Gastrocnemius medialis (tissue), 4 donors: ENCODE measurements at regions of chr17 and their contacts with region 1.

Region 1: DNA sequence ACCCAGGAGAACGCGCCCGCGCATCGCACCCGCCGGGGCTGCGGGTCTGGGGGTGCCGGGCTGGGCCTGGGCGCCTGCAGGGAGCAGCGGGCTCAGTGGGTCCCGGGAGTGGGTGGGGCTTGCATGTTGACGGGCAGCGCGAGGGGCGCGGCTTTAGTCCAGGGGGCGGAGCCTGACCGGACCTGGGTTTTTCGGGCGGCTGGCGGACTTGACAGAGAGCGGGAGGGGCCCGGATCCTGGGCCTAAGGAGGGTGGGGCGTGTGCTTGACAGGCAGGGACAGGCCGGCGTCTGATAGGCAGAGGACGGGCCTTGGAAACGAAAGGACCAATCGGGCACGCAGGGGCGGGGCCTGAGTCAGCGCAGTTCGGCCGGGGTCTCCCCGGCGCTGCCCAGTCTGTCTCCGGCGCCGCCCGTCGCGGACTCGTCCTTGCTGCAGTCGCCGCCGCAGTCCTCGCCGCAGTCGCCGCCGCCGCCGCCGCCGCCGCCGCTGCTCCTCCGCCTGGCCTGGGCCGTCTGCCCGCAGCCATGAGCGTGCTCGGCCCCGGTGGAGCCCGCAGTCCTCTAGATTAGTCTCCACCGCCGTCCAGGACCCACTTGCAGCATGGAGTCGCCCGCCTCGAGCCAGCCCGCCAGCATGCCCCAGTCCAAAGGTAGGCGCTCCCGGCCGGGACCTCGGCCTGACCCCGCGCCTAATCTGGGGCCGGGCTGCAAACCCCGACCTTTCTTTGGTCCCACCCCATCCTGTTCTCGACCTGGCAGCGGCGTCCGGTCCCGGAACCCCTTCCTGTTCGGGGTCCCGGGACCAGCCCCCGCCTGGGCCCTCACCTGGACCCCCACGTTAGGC is at the start of gene MAP2K3:
- DNase-seq: peak; percentile 100
- ATAC-seq: peak; percentile 29 to 35
- H3K4me3 ChIP-seq: peak within 1 kb of the TSS; percentile 72 to 88 (median 84)
- H3K27ac ChIP-seq: peak within 1 kb of the TSS; percentile 94 to 99 (median 97)
- H3K4me1 ChIP-seq: peaks cover 58 to 62% of the 10 kb centered on the region in 2 donors
- H3K27me3 ChIP-seq: no peaks in the 10 kb centered on the region
- CTCF ChIP-seq: no peak
- POLR2A ChIP-seq: peak; percentile 98 to 99
- total RNA-seq, gene MAP2K3: 15.7 to 170 (median 63.8) TPM

Region 2: GRCh38 chr17:21034340-21035235 is 250.0 kb before region 1 on chr17:
- in situ Hi-C with region 1: loop called in 1 of 4 experiments (anchors 10 kb)
- intact Hi-C with region 1: loop called (anchors 2 kb)
- DNase-seq: peak; percentile 90 to 95
- ATAC-seq: peak; percentile 94 to 96
- H3K4me3 ChIP-seq: peak overlapping the region; percentile 18 to 34 (median 32)
- H3K27ac ChIP-seq: peak overlapping the region; percentile 95 to 100 (median 98)
- H3K4me1 ChIP-seq: peaks cover 91% of the 10 kb centered on the region in 2 donors
- H3K27me3 ChIP-seq: no peaks in the 10 kb centered on the region
- CTCF ChIP-seq: no peak
- POLR2A ChIP-seq: peak; percentile 32 to 50

Region 3: GRCh38 chr17:21166595-21167210 is 117.8 kb before region 1 on chr17:
- in situ Hi-C with region 1: no loop called
- intact Hi-C with region 1: loop called (anchors 1 kb)
- DNase-seq: no peak
- ATAC-seq: peak; percentile 53 to 63
- H3K4me3 ChIP-seq: peak overlapping the region; percentile 34 to 42 (median 36)
- H3K27ac ChIP-seq: peak overlapping the region; percentile 92 to 98 (median 96)
- H3K4me1 ChIP-seq: peaks cover 84 to 89% of the 10 kb centered on the region in 2 donors
- H3K27me3 ChIP-seq: no peaks in the 10 kb centered on the region
- CTCF ChIP-seq: no peak
- POLR2A ChIP-seq: no peak

Region 4: DNA sequence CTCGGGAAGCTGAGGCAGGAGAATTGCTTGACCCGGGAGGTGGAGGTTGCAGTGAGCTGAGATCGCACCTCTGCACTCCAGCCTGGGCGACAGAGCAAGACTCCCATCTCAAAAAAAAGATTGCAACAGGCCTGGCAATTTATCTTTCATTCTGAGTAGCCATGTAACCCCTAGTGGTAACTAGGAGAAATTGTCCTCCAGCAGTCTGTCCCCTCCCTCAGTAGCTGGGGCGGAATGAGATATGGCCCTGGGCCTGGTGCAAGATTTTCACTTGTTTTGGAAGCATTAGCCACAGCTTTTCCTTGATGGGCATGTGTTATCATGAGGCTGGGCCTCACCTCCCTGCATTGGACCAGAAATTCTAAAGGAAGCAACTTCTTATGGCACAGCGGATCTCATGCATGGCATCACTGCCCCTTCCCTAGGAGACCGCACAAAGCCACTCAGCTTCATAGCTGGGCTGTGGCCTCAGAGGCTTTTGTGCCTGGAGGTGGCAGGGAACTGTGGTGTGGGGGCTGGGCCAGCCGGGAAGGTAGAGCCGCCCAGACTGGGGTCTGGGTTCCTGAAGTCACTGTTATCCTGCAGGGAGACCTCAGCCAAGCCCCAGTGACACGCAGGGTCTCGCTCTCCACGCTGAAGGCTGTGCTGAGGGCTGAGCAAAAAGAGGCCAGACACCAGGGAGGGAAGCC is 44.7 kb before region 1 on chr17:
- in situ Hi-C with region 1: no loop called
- intact Hi-C with region 1: loop called (anchors 2 kb)
- DNase-seq: no peak
- ATAC-seq: peak in 1 of 2 donors; percentile 20
- H3K4me3 ChIP-seq: no peak overlapping the region
- H3K27ac ChIP-seq: peak overlapping the region; percentile 89 to 95 (median 92)
- H3K4me1 ChIP-seq: peaks cover 33 to 47% of the 10 kb centered on the region in 2 donors
- H3K27me3 ChIP-seq: no peaks in the 10 kb centered on the region
- CTCF ChIP-seq: peak; percentile 16 to 58 (median 46)
- POLR2A ChIP-seq: no peak

Region 5: DNA sequence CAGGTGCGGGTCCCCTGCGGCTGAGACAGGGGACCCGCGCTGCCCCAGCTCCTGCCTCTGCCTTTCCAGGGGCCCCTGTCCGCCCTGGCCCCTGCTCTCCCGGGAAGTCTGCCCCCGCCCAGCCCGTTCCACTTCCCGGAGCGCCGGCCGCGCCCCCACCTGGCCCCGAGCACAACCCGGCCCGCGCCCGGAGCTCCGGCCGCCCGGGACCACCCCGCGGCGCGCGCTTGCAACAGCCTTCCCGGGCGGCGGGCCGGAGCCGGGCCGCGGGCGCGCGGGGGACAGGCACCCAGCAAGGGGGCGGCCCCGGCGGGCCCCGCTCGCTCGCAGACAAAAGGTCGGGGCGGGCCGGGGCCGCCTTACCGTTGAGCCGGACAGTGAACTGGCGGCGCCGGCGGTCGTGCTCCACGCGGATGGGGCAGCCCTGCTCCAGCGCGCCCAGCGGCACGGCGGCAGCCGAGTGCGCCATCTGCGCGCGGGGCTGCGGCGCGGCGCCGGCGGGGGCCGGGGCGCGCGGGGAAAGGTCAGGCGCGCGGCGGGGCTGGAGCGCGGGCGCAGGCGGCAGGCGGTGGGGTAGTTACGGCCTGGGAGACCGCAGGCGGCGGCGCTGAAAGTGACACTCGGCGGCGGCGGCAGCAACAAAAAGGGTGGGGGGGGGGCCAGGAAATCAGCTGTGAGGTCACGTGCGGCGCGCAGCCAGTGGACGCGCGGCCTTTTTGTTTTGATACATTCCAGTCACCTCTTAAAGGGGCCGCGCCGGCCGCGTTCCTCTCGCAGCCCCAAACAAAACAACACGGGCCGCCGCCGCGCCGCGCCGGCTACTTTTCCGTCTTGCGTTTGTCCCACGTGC is 31.5 kb before region 1 on chr17 and contains the start of gene NATD1:
- in situ Hi-C with region 1: no loop called
- intact Hi-C with region 1: loop called (anchors 2 kb)
- DNase-seq: peak; percentile 88 to 93
- ATAC-seq: peak; percentile 67 to 79
- H3K4me3 ChIP-seq: peak within 1 kb of the TSS; percentile 66 to 80 (median 70)
- H3K27ac ChIP-seq: peak within 1 kb of the TSS; percentile 89 to 95 (median 92)
- H3K4me1 ChIP-seq: peaks cover 45 to 51% of the 10 kb centered on the region in 2 donors
- H3K27me3 ChIP-seq: no peaks in the 10 kb centered on the region
- CTCF ChIP-seq: no peak
- POLR2A ChIP-seq: peak; percentile 86 to 91
- total RNA-seq, gene NATD1: 10.1 to 21.2 (median 15.5) TPM

Region 6: GRCh38 chr17:21339011-21339410 is 54.5 kb after region 1 on chr17:
- in situ Hi-C with region 1: no loop called
- intact Hi-C with region 1: no loop called
- DNase-seq: no peak
- ATAC-seq: no peak
- H3K4me3 ChIP-seq: no peak overlapping the region
- H3K27ac ChIP-seq: no peak overlapping the region
- H3K4me1 ChIP-seq: peaks cover 0 to 7% of the 10 kb centered on the region in 2 donors
- H3K27me3 ChIP-seq: no peaks in the 10 kb centered on the region
- CTCF ChIP-seq: no peak
- POLR2A ChIP-seq: no peak

Region 7: DNA sequence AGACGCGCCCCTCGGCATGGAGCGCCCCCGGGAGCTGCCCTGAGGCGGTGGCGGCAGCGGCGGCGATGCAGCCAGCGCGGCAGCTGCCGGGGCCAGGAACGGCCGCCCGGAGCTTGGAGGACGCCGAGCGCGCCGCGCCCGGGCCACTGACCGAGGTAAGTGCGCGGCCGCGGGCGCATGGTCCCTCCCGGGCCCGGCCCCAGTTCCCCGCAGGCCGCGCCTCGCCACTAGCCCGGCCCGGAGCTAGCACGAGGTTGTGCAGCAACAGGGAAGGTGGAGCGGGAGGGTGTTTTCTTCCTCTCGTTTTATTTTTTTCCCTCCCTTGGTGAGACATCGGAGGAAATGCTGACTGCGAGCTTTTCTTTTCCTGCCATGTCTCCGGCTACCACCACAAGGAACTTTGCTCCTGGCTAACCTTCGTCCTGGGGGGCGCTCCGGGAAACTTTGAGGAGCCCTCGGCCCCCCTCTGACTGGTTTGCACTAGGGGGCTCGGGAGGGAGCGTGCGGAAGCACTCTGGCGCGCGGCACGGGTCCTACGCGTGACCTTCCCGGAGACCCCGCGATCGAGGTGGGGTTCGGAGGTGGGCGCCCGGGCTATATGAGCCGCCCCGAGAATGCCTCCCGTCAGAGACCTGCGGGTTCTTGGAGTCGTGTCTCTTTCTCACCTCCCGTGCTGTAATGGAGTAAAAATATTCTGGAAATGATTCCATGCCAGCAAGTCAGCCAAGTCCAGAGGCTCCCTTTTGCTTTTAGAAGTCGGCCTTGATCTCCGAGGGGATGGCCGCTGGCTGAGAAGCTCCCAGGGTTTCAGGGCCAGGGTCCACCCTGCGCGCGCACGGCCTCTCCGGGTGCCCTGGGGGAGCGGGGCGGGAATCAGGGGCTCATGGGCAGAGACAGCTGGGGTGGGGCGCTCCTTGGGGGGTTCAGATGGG is 92.5 kb after region 1 on chr17:
- in situ Hi-C with region 1: no loop called
- intact Hi-C with region 1: loop called (anchors 5 kb)
- DNase-seq: peak in 1 of 2 donors; percentile 36
- ATAC-seq: peak; percentile 44 to 45
- H3K4me3 ChIP-seq: peak overlapping the region; percentile 59 to 68 (median 62)
- H3K27ac ChIP-seq: peak overlapping the region; percentile 88 to 93 (median 89)
- H3K4me1 ChIP-seq: peaks cover 28 to 44% of the 10 kb centered on the region in 2 donors
- H3K27me3 ChIP-seq: no peaks in the 10 kb centered on the region
- CTCF ChIP-seq: no peak
- POLR2A ChIP-seq: no peak